IMR-90 (cell line): ENCODE measurements at regions of chr3 and their contacts with region 1.

Region 1: GRCh38 chr3:57864853-57865252 is 108.7 kb downstream of the SLMAP start:
- DNase-seq: peak; percentile 45
- ATAC-seq: peak; percentile 63
- H3K4me3 ChIP-seq: no peak overlapping the region
- H3K27ac ChIP-seq: no peak overlapping the region
- H3K4me1 ChIP-seq: no peaks in the 10 kb centered on the region
- H3K27me3 ChIP-seq: no peaks in the 10 kb centered on the region
- CTCF ChIP-seq: peak; percentile 61
- POLR2A ChIP-seq: no peak
- RAD21 ChIP-seq: peak; percentile 66

Region 2: GRCh38 chr3:57569859-57570450 is 294.9 kb before region 1 on chr3:
- CTCF ChIA-PET with region 1: no interaction called
- POLR2A ChIA-PET with region 1: interaction called, 13 read pairs
- dilution Hi-C with region 1: no loop called
- in situ Hi-C with region 1: no loop called
- intact Hi-C with region 1: no loop called
- DNase-seq: no peak
- ATAC-seq: no peak
- H3K4me3 ChIP-seq: no peak overlapping the region
- H3K27ac ChIP-seq: no peak overlapping the region
- H3K4me1 ChIP-seq: no peaks in the 10 kb centered on the region
- H3K27me3 ChIP-seq: no peaks in the 10 kb centered on the region
- CTCF ChIP-seq: no peak
- POLR2A ChIP-seq: no peak
- RAD21 ChIP-seq: no peak

Region 3: GRCh38 chr3:58093573-58094195 is 228.8 kb after region 1 on chr3:
- CTCF ChIA-PET with region 1: interaction called, 3 read pairs
- POLR2A ChIA-PET with region 1: no interaction called
- dilution Hi-C with region 1: no loop called
- in situ Hi-C with region 1: loop called (anchors 10 kb)
- intact Hi-C with region 1: no loop called
- DNase-seq: peak; percentile 77
- ATAC-seq: no peak
- H3K4me3 ChIP-seq: no peak overlapping the region
- H3K27ac ChIP-seq: no peak overlapping the region
- H3K4me1 ChIP-seq: no peaks in the 10 kb centered on the region; the same call in 1 of the 2 replicates
- H3K27me3 ChIP-seq: no peaks in the 10 kb centered on the region
- CTCF ChIP-seq: no peak
- POLR2A ChIP-seq: no peak
- RAD21 ChIP-seq: no peak; the same call in 1 of the 2 replicates

Region 4: DNA sequence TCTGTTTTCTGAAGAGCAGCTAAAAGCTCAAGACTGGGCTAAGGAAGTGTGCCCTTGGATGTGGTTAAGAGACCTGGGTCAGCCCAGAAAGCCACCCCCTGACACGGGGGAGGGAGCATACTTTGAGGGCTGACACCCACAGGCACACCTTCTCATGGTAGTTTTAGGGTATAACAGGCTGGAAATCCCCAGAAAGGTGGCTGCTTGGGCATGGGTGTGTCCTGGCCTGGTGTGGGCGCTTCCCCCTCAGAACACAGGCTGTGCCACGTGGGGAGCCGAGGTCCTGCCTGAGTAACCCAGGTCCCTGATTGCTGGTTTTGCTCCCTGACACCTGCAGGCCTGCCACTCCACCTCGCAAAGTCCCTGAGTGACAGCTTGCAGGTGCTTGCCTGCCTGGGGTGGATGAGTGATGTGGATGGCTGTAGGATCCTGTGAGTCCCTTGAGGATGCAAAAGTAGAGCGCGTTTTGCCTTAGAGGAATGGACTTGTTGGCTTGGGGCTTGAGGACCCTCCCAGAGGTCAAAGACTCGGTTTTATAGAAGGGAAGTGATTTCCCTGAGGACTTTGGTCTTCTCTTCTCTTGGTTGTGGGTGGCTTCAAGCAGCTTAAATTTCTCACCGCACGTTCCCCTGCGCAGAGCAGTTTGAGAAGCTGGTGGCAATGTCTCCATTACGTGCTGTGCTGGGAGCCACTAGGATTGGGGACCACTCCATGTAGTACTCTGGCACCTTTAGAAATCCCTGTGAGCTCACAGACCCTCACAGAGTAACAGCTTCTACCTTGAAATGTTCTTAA is 251.5 kb after region 1 on chr3:
- CTCF ChIA-PET with region 1: no interaction called
- POLR2A ChIA-PET with region 1: no interaction called
- dilution Hi-C with region 1: no loop called
- in situ Hi-C with region 1: no loop called
- intact Hi-C with region 1: loop called (anchors 10 kb)
- DNase-seq: no peak
- ATAC-seq: no peak
- H3K4me3 ChIP-seq: no peak overlapping the region
- H3K27ac ChIP-seq: peak overlapping the region; percentile 5; the same call in 1 of the 2 replicates
- H3K4me1 ChIP-seq: peaks cover 17% of the 10 kb centered on the region
- H3K27me3 ChIP-seq: no peaks in the 10 kb centered on the region
- CTCF ChIP-seq: no peak
- POLR2A ChIP-seq: no peak
- RAD21 ChIP-seq: no peak